CD4-positive, alpha-beta memory T cell (primary cell): ENCODE measurements at regions of chr9 and their contacts with region 1.

Region 1: DNA sequence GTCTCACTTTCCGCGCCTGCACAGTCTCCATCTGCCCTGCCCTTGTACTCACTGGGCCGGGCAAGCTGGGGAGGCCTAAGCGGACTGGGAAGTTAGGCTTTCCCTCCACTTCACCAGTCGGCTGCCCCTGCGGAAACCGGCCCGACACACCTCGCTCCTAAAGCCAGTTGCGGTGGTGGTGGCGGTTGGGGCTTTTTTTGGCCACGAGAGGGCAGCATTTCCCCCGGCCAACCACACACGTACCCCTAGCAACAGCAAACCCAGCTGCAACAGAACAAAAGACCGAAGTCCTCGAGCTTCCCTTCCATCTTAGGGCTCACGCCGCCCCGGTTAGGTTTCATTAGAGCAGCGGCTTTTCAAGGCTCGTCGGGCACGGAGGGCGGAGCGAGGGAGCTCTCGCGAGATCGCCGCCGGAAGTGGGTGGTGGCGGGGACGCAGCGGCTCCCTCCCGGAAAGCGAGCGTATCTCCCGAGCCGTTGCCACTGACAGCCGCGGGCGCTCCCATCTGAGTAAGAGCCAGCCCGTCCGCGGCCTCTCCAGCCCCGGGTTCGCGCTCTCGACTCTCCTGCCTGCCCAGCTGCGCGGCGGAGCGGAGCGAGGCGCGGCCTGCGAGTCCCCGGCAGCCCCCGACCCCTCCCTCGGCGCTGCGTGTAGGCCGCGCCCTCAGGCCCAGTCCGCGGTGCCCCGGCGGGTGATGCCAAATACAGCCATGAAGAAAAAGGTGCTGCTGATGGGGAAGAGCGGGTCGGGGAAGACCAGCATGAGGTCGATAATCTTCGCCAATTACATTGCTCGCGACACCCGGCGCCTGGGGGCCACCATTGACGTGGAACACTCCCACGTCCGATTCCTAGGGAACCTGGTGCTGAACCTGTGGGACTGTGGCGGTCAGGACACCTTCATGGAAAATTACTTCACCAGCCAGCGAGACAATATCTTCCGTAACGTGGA is at the start of gene RRAGA:
- DNase-seq: peak; percentile 94 to 96 (median 95)
- H3K4me3 ChIP-seq: peak within 1 kb of the TSS; percentile 84 to 96
- H3K4me3 Mint-ChIP-seq: peak within 1 kb of the TSS; percentile 91 to 99 (median 96)
- H3K27ac ChIP-seq: peak within 1 kb of the TSS; percentile 87
- H3K27ac Mint-ChIP-seq: peak within 1 kb of the TSS; percentile 96 to 100 (median 99)
- H3K4me1 ChIP-seq: peaks cover 39% of the 10 kb centered on the region
- H3K4me1 Mint-ChIP-seq: peaks cover 21 to 56% (median 40%) of the 10 kb centered on the region in 4 donors
- H3K27me3 ChIP-seq: no peaks in the 10 kb centered on the region
- H3K27me3 Mint-ChIP-seq: no peaks in the 10 kb centered on the region
- total RNA-seq, gene RRAGA: 57.4 to 58.0 TPM

Region 2: DNA sequence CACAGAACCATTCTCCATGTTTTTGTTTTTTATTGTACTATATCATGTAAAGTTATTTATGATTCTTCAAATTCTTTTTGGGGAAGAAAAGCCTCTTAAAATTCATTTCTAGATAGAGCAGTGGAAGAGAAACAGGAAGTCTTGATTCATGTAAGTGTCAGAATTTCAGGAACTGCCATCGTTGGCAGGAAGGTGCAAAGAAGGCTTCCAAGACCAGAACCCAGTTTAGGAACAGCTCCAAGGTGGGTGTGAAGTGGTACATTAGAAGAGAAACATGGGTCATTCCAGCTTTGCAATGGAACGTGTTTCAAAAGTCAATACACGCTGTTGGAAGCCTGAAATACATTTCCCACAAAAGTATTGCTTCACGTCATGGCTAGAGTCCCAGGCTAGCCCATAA is 31.0 kb before region 1 on chr9:
- CTCF ChIA-PET with region 1: no interaction called
- POLR2A ChIA-PET with region 1: no interaction called
- intact Hi-C with region 1: no loop called
- DNase-seq: no peak
- H3K4me3 ChIP-seq: no peak overlapping the region
- H3K4me3 Mint-ChIP-seq: no peak overlapping the region
- H3K27ac ChIP-seq: no peak overlapping the region
- H3K27ac Mint-ChIP-seq: peak overlapping the region in 1 of 7 donors; percentile 41
- H3K4me1 ChIP-seq: no peaks in the 10 kb centered on the region
- H3K4me1 Mint-ChIP-seq: peaks cover 0 to 6% (median 1%) of the 10 kb centered on the region in 4 donors
- H3K27me3 ChIP-seq: no peaks in the 10 kb centered on the region
- H3K27me3 Mint-ChIP-seq: peaks cover 0 to 1% of the 10 kb centered on the region in 2 donors

Region 3: DNA sequence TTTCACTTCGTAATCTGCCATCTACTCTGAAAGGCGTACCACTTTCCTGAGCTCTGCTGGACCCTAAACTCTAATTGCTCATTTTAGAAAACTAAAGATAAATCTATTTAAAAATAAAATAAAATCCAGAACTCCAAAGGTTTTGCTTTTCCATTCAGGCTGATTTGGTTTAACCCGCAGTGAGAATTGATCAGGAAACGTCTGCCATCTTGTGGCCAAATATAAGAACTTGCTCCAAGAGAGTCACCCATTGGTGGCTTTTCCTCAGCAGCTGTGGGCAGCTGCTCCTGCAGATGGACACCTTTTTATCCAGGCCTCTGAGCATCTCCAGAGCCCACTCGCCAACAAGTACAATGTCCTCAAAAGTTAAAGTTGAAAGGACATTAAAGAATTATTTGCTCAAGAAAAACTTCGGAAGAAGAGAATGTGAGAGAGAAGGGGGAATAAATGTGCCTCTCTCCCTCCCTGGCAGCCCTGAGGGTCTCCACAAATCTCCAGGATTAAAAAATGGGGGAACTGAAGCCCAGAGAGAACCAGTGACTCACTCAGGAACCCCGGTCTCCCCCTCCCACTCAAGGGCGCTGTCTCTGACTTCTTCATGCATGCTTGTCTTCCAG is 20.3 kb before region 1 on chr9:
- CTCF ChIA-PET with region 1: interaction called, 12 read pairs
- POLR2A ChIA-PET with region 1: interaction called, 6 read pairs
- intact Hi-C with region 1: no loop called
- DNase-seq: peak in 4 of 5 donors; percentile 21 to 35 (median 24)
- H3K4me3 ChIP-seq: no peak overlapping the region
- H3K4me3 Mint-ChIP-seq: peak overlapping the region in 1 of 8 donors; percentile 37
- H3K27ac ChIP-seq: no peak overlapping the region
- H3K27ac Mint-ChIP-seq: no peak overlapping the region
- H3K4me1 ChIP-seq: no peaks in the 10 kb centered on the region
- H3K4me1 Mint-ChIP-seq: peaks cover 0 to 2% (median 0%) of the 10 kb centered on the region in 4 donors
- H3K27me3 ChIP-seq: peaks cover 4% of the 10 kb centered on the region
- H3K27me3 Mint-ChIP-seq: peaks cover 4 to 11% of the 10 kb centered on the region in 2 donors

Region 4: DNA sequence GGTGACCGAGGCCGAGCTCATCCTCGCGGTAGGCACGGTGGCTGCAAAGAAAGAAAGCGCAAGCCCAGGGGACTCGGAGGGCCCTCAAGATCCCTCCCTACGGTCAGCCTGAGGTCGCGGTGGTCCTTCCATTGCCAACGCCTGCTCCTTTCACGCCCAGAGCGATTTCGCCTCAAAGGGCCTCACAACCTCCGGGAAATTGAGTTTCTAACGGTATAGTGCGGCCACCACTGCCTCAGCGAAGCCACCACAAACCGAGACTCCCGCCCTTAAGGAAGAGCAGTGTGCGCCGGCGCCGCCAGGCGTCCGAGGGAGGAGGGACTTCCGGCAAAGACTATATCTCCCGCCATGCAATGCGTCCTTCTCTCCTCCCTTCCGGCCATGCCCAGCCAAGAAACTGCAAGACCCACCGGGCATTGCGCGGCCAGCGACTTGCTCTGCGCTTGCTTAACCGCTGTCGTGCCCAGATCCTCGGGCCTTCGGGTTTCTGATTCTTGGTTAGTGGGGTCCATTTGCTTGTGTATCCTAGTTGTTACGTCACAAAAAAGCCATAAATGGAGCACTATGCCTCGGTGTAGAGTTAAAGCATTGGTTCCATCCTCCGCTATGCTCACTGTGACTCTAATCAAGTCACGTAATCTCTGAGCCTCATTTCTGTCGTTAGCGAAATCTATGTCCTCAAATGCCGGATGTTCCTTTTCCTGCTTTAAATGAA is 53.5 kb after region 1 on chr9 and contains the start of gene HAUS6:
- CTCF ChIA-PET with region 1: interaction called, 11 read pairs
- POLR2A ChIA-PET with region 1: interaction called, 9 read pairs
- intact Hi-C with region 1: loop called (anchors 1 kb)
- DNase-seq: peak; percentile 93 to 98 (median 96)
- H3K4me3 ChIP-seq: peak within 1 kb of the TSS; percentile 73 to 74
- H3K4me3 Mint-ChIP-seq: peak within 1 kb of the TSS; percentile 91 to 98 (median 98)
- H3K27ac ChIP-seq: peak within 1 kb of the TSS; percentile 74
- H3K27ac Mint-ChIP-seq: peak within 1 kb of the TSS; percentile 91 to 98 (median 96)
- H3K4me1 ChIP-seq: peaks cover 28% of the 10 kb centered on the region
- H3K4me1 Mint-ChIP-seq: peaks cover 15 to 39% (median 20%) of the 10 kb centered on the region in 4 donors
- H3K27me3 ChIP-seq: no peaks in the 10 kb centered on the region
- H3K27me3 Mint-ChIP-seq: no peaks in the 10 kb centered on the region
- total RNA-seq, gene HAUS6: 19.4 to 20.9 TPM

Region 5: DNA sequence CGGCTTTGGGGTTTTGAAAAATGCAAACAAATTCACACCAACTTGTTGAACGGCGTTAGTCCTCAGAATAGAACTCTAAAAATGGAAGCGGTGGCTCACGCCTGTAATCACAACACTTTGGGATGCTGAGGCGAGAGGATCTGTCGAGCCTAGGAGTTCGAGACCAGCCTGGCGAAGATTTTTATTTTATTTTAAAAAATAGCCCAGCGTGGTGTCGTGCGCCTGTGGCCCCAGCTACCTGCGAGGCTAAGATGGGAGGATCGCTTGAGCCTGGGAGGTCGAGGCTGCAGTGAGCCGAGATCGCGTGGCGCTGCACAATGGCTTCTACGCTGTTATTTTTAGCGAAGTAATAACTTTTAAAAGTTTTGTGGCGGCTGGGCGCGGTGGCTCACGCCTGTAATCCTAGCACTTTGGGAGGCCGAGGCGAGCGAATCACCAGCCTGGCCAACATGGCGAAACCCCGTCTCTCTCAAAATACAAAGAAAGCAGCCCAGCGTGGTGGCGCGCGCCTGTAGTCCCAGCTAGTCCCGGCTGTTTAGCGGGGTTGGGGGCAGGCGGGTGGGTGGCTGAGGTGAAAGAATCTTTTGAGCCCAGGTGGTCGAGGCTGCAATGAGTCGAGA is 78.8 kb after region 1 on chr9:
- CTCF ChIA-PET with region 1: interaction called, 6 read pairs
- POLR2A ChIA-PET with region 1: interaction called, 21 read pairs
- intact Hi-C with region 1: loop called (anchors 2 kb)
- DNase-seq: peak in 3 of 5 donors; percentile 36 to 52 (median 37)
- H3K4me3 ChIP-seq: peak overlapping the region; percentile 57 to 79
- H3K4me3 Mint-ChIP-seq: peak overlapping the region; percentile 92 to 98 (median 96)
- H3K27ac ChIP-seq: peak overlapping the region; percentile 73
- H3K27ac Mint-ChIP-seq: peak overlapping the region; percentile 90 to 96 (median 94)
- H3K4me1 ChIP-seq: peaks cover 61% of the 10 kb centered on the region
- H3K4me1 Mint-ChIP-seq: peaks cover 38 to 63% (median 48%) of the 10 kb centered on the region in 4 donors
- H3K27me3 ChIP-seq: no peaks in the 10 kb centered on the region
- H3K27me3 Mint-ChIP-seq: no peaks in the 10 kb centered on the region

Region 6: DNA sequence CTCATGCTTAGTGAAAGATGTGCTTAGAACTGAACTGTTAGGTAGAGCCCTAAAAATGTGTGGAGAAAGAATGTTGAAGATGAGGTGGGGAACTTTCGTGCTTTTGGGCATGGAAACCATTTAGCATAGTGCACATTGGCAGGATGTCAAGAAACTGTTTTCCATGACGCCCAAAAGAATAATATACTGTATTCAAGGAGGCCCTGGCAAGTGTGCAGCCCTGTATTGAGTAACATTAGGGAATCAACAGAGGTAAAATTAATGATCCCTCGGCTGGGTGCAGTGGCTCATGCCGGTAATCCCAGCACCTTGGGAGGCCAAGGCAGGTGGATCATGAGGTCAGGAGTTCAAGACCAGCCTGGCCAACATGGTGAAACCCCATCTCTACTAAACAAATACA is 98.9 kb after region 1 on chr9:
- CTCF ChIA-PET with region 1: no interaction called
- POLR2A ChIA-PET with region 1: no interaction called
- intact Hi-C with region 1: no loop called
- DNase-seq: no peak
- H3K4me3 ChIP-seq: no peak overlapping the region
- H3K4me3 Mint-ChIP-seq: no peak overlapping the region
- H3K27ac ChIP-seq: no peak overlapping the region
- H3K27ac Mint-ChIP-seq: no peak overlapping the region
- H3K4me1 ChIP-seq: no peaks in the 10 kb centered on the region
- H3K4me1 Mint-ChIP-seq: no peaks in the 10 kb centered on the region
- H3K27me3 ChIP-seq: no peaks in the 10 kb centered on the region
- H3K27me3 Mint-ChIP-seq: no peaks in the 10 kb centered on the region

Region 7: DNA sequence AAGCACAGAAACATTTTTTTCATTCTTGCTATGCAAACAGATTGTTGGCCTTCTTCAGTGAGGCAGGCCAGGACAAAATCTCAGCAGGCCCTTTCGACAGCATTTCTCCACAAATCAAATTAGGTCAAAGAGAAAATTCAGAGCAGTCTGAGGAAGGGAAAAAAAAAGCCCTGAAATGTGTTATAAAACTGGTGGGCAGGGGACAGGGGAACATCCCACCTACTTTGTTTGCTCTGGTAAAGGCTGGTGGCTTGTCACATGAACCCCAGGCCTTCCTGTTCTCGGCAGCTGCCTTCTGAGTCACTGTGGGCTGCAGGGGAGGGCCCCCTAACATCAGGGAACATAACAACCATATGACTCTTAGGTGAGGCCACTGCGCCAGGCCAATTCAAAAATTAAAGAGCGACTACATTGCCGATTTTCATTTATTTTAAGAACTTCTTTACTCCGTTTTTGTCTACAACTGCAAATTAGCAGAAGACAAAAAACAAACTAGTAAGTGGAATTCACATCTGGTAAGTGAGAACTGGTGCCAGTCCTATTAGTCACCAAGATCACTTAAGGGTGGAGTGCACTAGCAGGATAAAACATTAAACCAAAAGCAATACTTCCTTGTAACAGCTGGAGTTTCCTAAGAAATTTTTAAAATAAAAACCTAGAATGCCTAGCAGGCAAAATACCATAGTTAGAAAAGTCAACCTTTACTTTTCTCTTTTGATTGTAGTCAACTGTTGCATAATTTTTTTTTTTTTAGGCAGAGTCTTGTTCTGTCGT is 135.1 kb after region 1 on chr9:
- CTCF ChIA-PET with region 1: interaction called, 12 read pairs
- POLR2A ChIA-PET with region 1: interaction called, 13 read pairs
- intact Hi-C with region 1: no loop called
- DNase-seq: peak; percentile 57 to 90 (median 73)
- H3K4me3 ChIP-seq: no peak overlapping the region
- H3K4me3 Mint-ChIP-seq: peak overlapping the region in 7 of 8 donors; percentile 26 to 73 (median 51)
- H3K27ac ChIP-seq: peak overlapping the region; percentile 60
- H3K27ac Mint-ChIP-seq: peak overlapping the region; percentile 89 to 97 (median 95)
- H3K4me1 ChIP-seq: peaks cover 22% of the 10 kb centered on the region
- H3K4me1 Mint-ChIP-seq: peaks cover 9 to 20% (median 15%) of the 10 kb centered on the region in 4 donors
- H3K27me3 ChIP-seq: no peaks in the 10 kb centered on the region
- H3K27me3 Mint-ChIP-seq: no peaks in the 10 kb centered on the region

Region 8: DNA sequence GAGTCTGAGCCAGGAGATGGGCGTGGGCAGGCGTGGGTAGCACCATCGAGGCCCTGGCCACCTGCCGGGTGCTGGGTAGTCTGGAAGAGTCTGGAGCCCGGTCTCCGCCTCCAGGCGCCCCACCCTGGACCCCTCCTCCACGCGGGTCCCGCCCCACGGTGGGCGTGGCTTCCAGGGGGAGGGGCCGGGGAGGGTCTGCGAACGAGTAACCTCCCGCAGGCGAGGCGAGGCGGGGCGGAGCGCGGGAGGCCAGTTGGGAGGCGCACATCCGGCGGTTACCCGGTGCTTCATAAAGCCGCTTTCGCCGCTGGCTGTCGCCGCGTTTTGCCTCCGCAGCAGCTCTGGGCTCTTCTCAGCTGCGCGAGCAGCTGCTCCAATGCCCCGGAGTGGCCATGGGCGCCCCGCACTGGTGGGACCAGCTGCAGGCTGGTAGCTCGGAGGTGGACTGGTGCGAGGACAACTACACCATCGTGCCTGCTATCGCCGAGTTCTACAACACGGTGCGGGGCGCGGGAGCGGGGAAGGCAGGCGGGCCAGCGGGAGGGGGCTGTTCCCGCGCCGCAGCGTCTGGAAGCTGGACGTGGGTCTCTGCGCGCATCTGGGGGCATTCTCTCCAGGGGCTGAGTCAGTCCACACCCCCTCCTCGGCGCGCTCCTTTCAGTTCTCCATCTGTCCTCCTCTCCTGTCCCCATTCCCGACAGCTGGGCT is 359.6 kb after region 1 on chr9 and contains the start of gene ACER2:
- CTCF ChIA-PET with region 1: no interaction called
- POLR2A ChIA-PET with region 1: interaction called, 9 read pairs
- intact Hi-C with region 1: loop called (anchors 1 kb)
- DNase-seq: peak; percentile 91 to 97 (median 93)
- H3K4me3 ChIP-seq: peak within 1 kb of the TSS; percentile 94 to 100
- H3K4me3 Mint-ChIP-seq: peak within 1 kb of the TSS; percentile 91 to 96 (median 96)
- H3K27ac ChIP-seq: peak within 1 kb of the TSS; percentile 69
- H3K27ac Mint-ChIP-seq: peak within 1 kb of the TSS; percentile 65 to 94 (median 90)
- H3K4me1 ChIP-seq: peaks cover 23% of the 10 kb centered on the region
- H3K4me1 Mint-ChIP-seq: peaks cover 5 to 24% (median 16%) of the 10 kb centered on the region in 4 donors
- H3K27me3 ChIP-seq: no peaks in the 10 kb centered on the region
- H3K27me3 Mint-ChIP-seq: no peaks in the 10 kb centered on the region
- total RNA-seq, gene ACER2: 5.9 to 6.0 TPM